ENCODE measurements at regions of chr20 and their contacts with region 1.

Region 1: GRCh38 chr20:40962730-40963504 is 65.7 kb upstream of the TOP1 start:
- DNase-seq: peak; percentile 80
- H3K4me3 ChIP-seq: no peak overlapping the region
- H3K27ac ChIP-seq: no peak overlapping the region
- H3K4me1 ChIP-seq: no peaks in the 10 kb centered on the region
- H3K27me3 ChIP-seq: no peaks in the 10 kb centered on the region
- CTCF ChIP-seq: peak; percentile 33 to 88 (median 72)
- EP300 ChIP-seq: no peak
- POLR2A ChIP-seq: no peak

Region 2: DNA sequence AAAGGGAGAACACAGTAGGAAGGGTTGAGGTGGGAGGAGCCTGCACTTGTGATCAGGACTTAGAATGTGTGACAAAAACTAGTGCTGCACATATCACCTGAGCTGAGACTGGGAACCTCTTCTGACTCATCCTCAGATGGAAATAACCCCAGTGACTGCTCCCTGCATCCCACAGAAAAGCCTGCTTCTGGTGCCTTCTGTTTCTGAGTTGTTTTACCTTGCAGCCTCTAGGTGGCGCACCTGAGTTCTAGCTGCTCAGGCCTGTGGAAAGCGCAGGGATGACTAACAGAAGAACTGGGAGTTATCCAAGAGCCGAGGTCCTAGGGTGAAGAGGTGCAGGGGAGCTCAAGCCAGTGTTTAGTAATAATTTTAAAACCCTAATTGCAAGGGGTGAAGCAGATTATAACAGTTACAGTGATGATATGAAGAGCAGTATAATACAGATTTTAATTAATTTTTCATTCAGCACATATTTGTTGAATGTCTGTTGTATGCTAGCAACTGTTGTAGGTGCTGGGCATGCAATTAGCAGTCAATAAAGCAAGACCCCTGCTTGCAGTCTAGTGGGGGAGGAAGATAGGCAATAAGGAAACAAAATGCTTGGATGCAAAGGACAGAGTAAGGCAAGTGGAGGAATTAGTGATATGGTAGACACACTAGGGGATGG is 1698.3 kb before region 1 on chr20:
- intact Hi-C with region 1: loop called (anchors 5 kb)
- DNase-seq: peak; percentile 82
- H3K4me3 ChIP-seq: no peak overlapping the region
- H3K27ac ChIP-seq: no peak overlapping the region
- H3K4me1 ChIP-seq: peaks cover 0 to 9% (median 4%) of the 10 kb centered on the region in 4 donors
- H3K27me3 ChIP-seq: no peaks in the 10 kb centered on the region
- CTCF ChIP-seq: peak; percentile 32 to 82 (median 62)
- EP300 ChIP-seq: no peak
- POLR2A ChIP-seq: no peak

Region 3: DNA sequence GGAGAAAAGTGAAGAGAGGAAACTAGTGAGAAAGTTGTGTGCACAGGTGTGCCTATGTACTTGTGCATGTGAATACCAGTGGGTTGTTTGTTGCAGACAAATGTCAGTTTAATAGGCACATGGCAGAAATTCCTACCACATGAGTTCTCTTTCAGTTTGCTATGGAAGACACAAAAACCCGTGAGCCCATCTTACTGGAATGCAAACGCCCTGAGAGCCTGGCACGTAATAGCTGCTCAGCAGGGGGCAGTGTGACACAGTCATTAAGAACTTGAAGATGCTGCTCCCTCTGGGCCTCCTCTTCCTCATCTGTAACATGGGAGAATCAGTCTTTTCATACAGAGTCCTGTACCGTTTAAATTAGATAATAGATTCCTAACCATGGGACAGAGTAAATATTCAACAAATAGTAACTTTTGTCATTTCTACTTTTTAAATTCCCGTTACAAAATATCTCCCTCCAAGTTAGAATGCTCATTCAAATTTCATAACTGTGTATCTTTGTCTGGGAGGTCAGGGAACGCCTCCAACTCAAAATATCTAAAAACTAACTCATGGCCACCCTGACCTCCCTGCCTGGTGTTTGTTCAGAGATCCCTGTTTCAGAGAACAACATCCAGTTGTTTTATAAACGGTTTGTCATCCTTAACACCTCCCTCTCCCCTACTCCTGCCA is 1076.8 kb before region 1 on chr20:
- intact Hi-C with region 1: loop called (anchors 5 kb)
- DNase-seq: peak; percentile 82
- H3K4me3 ChIP-seq: no peak overlapping the region
- H3K27ac ChIP-seq: peak overlapping the region in 1 of 4 donors; percentile 16
- H3K4me1 ChIP-seq: no peaks in the 10 kb centered on the region
- H3K27me3 ChIP-seq: no peaks in the 10 kb centered on the region
- CTCF ChIP-seq: peak in 3 of 4 experiments; percentile 42 to 57 (median 51)
- EP300 ChIP-seq: no peak
- POLR2A ChIP-seq: no peak

Region 4: GRCh38 chr20:41095110-41095969 is 132.4 kb after region 1 on chr20:
- intact Hi-C with region 1: loop called (anchors 1 kb)
- DNase-seq: peak; percentile 82
- H3K4me3 ChIP-seq: no peak overlapping the region
- H3K27ac ChIP-seq: no peak overlapping the region
- H3K4me1 ChIP-seq: peaks cover 0 to 10% (median 9%) of the 10 kb centered on the region in 4 donors
- H3K27me3 ChIP-seq: no peaks in the 10 kb centered on the region
- CTCF ChIP-seq: peak; percentile 39 to 78 (median 68)
- EP300 ChIP-seq: no peak
- POLR2A ChIP-seq: no peak